ENCODE measurements at regions of chr3 and their contacts with region 1.

Region 1: GRCh38 chr3:115099986-115100571 is 47.0 kb downstream of the ZBTB20 start:
- DNase-seq: peak; percentile 40
- H3K4me3 ChIP-seq: peak overlapping the region; percentile 14
- H3K27ac ChIP-seq: peak overlapping the region; percentile 30
- H3K4me1 ChIP-seq: no peaks in the 10 kb centered on the region
- H3K27me3 ChIP-seq: no peaks in the 10 kb centered on the region
- CTCF ChIP-seq: no peak

Region 2: DNA sequence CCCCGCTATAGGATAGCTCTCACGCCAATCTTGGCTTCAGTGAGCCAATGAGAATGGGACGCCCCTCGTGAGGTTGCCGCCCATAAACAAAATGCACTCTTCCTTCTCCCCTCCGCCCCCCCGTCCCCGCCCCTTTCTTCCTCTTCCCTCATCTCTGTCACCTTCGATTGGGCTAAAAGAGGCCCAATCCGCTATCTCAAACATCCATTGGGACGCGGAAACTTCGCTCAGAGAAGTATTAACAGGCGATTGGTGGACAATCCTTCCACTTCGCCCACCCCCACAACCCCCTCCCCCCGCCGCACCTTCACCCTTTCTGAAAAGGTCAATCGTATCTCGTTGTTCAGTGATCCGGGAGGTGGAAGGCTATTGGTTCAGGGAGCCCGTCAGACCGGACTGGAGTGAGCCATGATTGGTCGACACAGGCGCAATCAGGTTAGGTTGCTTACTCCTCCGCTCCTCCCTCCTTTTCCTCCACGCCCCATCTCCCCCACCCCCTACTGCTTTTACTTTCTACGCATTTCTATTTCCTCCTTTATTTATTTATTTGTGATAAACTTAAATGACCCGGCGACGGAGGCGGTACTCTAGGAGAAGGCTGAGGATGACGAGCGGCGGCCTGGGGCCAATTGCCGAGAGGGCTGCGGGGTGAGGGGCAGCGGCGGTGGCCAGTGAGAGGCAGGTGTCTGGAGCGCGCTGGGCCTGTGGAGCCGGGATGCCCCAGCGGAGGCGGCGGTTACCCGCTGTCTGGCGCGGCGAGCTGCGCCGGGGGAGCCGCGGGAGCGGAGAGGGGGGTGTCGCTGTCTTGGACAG is 47.5 kb after region 1 on chr3:
- intact Hi-C with region 1: loop called (anchors 5 kb)
- DNase-seq: peak; percentile 99
- H3K4me3 ChIP-seq: peak overlapping the region; percentile 76
- H3K27ac ChIP-seq: peak overlapping the region; percentile 93
- H3K4me1 ChIP-seq: peaks cover 3% of the 10 kb centered on the region
- H3K27me3 ChIP-seq: no peaks in the 10 kb centered on the region
- CTCF ChIP-seq: no peak

Measured in colonic mucosa (tissue), 4 donors.